ENCODE measurements at regions of chr10 and their contacts with region 1.

Region 1: DNA sequence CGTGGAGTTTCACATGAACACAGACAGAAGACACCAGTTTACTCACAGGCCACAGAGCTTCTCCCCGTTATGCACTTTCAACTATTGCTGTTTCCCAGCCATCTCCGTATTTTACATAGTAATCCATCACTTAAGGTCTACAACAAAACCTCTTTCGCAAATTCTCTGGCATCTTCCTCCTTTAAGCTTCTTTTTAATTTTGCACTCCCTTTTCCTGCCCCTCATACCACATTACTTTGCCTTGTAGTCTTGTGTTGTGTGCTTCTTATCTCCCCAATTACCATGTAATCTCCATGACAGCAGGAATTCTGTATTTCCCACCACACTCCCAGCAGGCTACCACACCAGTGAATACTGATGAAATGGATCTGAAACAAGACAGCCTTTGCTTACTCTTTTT is 87.3 kb downstream of the ODAD2 start:
- DNase-seq: no peak
- ATAC-seq: no peak
- H3K4me3 ChIP-seq: no peak overlapping the region
- H3K27ac ChIP-seq: no peak overlapping the region
- H3K4me1 ChIP-seq: no peaks in the 10 kb centered on the region
- H3K27me3 ChIP-seq: peaks cover 0 to 11% (median 0%) of the 10 kb centered on the region in 9 donors
- CTCF ChIP-seq: no peak
- POLR2A ChIP-seq: no peak

Region 2: GRCh38 chr10:27982875-27983543 is 71.5 kb after region 1 on chr10:
- intact Hi-C with region 1: loop called in 1 of 10 experiments (anchors 10 kb)
- DNase-seq: no peak
- ATAC-seq: no peak
- H3K4me3 ChIP-seq: no peak overlapping the region
- H3K27ac ChIP-seq: no peak overlapping the region
- H3K4me1 ChIP-seq: no peaks in the 10 kb centered on the region
- H3K27me3 ChIP-seq: no peaks in the 10 kb centered on the region
- CTCF ChIP-seq: no peak
- POLR2A ChIP-seq: no peak

Region 3: GRCh38 chr10:27997865-27998253 is 86.3 kb after region 1 on chr10:
- intact Hi-C with region 1: no loop called
- DNase-seq: no peak
- ATAC-seq: peak in 1 of 4 donors; percentile 12
- H3K4me3 ChIP-seq: peak overlapping the region in 11 of 12 donors; percentile 38 to 74 (median 61)
- H3K27ac ChIP-seq: peak overlapping the region in 1 of 12 donors; percentile 74
- H3K4me1 ChIP-seq: peaks cover 0 to 12% (median 0%) of the 10 kb centered on the region in 12 donors
- H3K27me3 ChIP-seq: peaks cover 0 to 38% (median 0%) of the 10 kb centered on the region in 9 donors
- CTCF ChIP-seq: no peak
- POLR2A ChIP-seq: no peak